BJ (cell line): ENCODE measurements at regions of chr10 and their contacts with region 1.

Region 1: DNA sequence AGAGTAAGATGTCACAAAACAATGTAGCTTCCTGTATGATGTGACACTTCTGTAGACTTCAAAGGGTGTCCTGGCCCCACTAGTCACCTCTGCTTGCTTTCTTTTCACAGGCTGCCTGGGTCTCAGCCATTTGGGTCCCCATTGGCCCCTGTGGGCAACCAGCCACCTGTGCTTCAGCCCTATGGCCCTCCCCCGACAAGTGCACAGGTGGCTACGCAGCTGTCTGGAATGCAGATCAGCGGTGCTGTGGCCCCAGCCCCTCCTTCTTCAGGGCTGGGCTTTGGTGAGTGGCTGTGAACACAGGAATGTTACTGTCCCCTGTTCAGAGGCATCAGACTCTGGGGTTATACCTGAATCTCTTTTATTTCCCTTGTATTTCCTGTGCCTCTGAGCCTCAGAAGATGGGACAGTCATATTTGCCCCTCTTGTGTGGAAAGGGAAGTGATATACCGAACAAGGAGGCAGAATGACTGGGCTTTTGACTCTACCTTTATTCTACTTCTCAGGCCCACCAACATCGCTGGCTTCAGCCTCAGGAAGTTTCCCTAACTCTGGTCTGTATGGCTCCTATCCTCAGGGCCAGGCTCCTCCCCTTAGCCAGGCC is 15.4 kb downstream of the SEC24C start:
- DNase-seq: no peak
- H3K4me3 ChIP-seq: no peak overlapping the region
- H3K27me3 ChIP-seq: no peaks in the 10 kb centered on the region
- CTCF ChIP-seq: no peak

Region 2: DNA sequence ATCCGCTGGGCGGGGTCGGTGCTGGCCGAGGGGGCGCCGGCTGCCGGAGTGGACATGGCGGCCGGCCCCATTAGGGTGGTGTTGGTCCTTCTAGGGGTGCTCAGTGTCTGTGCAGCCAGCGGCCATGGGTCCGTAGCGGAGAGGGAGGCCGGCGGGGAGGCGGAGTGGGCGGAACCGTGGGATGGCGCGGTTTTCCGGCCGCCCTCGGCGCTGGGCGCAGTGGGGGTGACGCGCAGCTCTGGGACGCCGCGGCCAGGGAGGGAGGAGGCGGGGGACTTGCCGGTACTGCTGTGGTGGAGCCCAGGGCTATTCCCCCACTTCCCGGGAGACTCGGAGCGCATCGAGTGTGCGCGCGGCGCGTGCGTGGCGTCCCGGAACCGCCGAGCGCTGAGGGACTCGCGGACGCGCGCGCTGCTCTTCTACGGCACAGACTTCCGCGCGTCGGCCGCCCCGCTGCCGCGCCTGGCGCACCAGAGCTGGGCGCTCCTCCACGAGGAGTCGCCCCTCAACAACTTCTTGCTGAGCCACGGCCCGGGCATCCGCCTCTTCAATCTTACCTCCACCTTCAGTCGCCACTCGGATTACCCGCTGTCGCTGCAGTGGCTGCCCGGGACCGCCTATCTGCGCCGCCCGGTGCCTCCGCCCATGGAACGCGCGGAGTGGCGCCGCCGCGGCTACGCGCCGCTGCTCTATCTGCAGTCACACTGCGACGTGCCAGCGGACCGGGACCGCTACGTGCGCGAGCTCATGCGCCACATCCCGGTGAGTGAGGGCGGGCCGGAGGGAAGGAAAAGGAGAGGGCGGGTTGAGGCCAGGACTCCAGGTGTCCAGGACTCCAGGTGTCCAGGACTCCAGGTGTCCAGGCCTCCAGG is 12.9 kb after region 1 on chr10:
- CTCF ChIA-PET with region 1: interaction called, 16 read pairs
- POLR2A ChIA-PET with region 1: no interaction called
- DNase-seq: no peak
- H3K4me3 ChIP-seq: peak overlapping the region; percentile 86
- H3K27me3 ChIP-seq: no peaks in the 10 kb centered on the region
- CTCF ChIP-seq: 0 out of 2 replicates have a peak, but pooled peaks have one; percentile 14

Region 3: GRCh38 chr10:73781879-73782744 is 22.5 kb after region 1 on chr10 and contains the start of gene CHCHD1:
- CTCF ChIA-PET with region 1: no interaction called
- POLR2A ChIA-PET with region 1: interaction called, 25 read pairs
- DNase-seq: no peak
- H3K4me3 ChIP-seq: peak within 1 kb of the TSS; percentile 99
- H3K27me3 ChIP-seq: no peaks in the 10 kb centered on the region
- CTCF ChIP-seq: no peak
- polyA plus RNA-seq, gene CHCHD1: 14.3 and 35.4 TPM in 2 replicates